Esophagus muscularis mucosa (tissue), 4 donors: ENCODE measurements at regions of chr6 and their contacts with region 1.

Region 1: DNA sequence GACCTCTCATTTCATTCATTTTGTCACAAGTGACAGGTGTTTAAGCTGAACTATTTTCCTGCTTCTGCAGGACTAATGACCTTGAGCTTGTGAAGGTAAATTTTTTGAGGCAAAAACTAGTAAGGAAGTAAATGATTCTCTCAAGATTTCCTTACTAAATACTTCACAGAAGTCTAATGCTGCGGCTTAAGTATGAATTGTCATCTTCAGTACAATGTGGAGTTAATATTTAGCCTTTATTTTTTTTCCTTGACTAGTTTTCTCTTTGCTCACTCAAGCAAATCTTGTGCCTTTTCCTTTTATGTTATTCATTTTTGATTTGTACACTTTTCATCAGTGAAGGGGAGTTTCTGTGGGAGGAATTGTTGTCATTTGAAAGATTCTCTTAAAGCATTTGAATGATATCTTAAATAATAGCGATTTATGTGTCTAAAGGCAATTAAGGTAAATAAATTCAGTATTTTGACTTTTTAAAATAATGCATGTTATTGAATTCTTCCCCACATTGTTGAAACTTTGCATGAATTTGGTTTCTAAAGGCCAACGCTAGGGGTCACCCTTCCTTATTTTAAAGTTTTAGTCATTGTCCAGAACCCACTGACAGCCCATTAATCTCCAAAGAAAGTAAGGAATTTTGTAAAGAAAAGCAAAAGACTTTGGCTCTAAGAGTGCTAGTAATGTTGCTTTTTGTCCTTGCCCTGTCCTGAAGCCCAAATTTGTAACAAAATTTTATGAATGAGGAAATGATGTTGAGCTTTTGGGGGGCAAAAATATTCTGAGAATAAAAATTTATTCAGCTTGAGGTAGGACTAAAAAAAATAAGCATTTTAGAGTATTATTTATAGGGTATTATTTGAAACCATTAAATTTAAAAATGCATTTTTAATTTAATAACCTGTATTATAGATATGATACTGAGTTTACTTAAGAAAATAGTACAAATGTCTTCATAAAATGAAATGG is 157.4 kb upstream of the LAMA2 start:
- DNase-seq: no peak
- H3K4me3 ChIP-seq: no peak overlapping the region
- H3K27ac ChIP-seq: no peak overlapping the region
- H3K4me1 ChIP-seq: no peaks in the 10 kb centered on the region
- H3K27me3 ChIP-seq: no peaks in the 10 kb centered on the region
- CTCF ChIP-seq: peak; percentile 26 to 62 (median 55)
- EP300 ChIP-seq: no peak
- POLR2A ChIP-seq: no peak

Region 2: DNA sequence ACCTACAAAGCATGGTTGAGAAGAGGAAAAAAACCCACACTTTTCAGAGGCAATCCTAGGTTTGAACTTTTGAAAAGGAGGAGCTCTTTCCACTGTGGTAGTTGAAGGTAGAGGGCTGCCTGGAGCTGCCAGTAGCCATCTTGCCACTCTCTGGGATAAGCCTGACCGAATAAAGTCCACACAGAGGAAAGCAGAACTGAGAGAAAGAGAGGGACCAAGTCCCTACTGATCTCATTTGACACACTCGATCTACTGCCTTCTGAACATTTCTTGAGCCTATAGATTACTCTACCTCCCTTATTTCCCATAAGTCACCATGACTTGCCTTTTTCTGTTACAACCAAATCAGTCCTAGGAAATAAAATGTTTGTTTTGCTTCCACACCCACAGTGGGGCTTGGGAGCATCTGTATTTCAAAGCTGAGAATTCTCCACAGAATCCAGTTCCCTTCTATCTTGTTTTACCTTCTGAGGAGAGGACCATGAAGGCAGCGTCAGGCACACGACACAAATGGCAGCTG is 58.2 kb before region 1 on chr6:
- intact Hi-C with region 1: no loop called
- DNase-seq: no peak
- H3K4me3 ChIP-seq: no peak overlapping the region
- H3K27ac ChIP-seq: no peak overlapping the region
- H3K4me1 ChIP-seq: no peaks in the 10 kb centered on the region
- H3K27me3 ChIP-seq: no peaks in the 10 kb centered on the region
- CTCF ChIP-seq: no peak
- EP300 ChIP-seq: no peak
- POLR2A ChIP-seq: no peak

Region 3: GRCh38 chr6:128882991-128883611 is 157.5 kb after region 1 on chr6 and contains the start of gene LAMA2:
- intact Hi-C with region 1: no loop called
- DNase-seq: peak; percentile 95
- H3K4me3 ChIP-seq: peak within 1 kb of the TSS; percentile 58 to 67 (median 64)
- H3K27ac ChIP-seq: peak within 1 kb of the TSS; percentile 45 to 77 (median 72)
- H3K4me1 ChIP-seq: peaks cover 3 to 13% (median 8%) of the 10 kb centered on the region in 4 donors
- H3K27me3 ChIP-seq: no peaks in the 10 kb centered on the region
- CTCF ChIP-seq: peak; percentile 13 to 39 (median 17)
- EP300 ChIP-seq: no peak
- POLR2A ChIP-seq: peak; percentile 30
- total RNA-seq, gene LAMA2: 115 to 153 (median 134) TPM

Region 4: GRCh38 chr6:129370268-129370916 is 644.8 kb after region 1 on chr6:
- intact Hi-C with region 1: loop called (anchors 10 kb)
- DNase-seq: no peak
- H3K4me3 ChIP-seq: no peak overlapping the region
- H3K27ac ChIP-seq: no peak overlapping the region
- H3K4me1 ChIP-seq: peaks cover 0 to 7% (median 7%) of the 10 kb centered on the region in 4 donors
- H3K27me3 ChIP-seq: no peaks in the 10 kb centered on the region
- CTCF ChIP-seq: peak; percentile 47 to 67 (median 60)
- EP300 ChIP-seq: no peak
- POLR2A ChIP-seq: no peak